ENCODE measurements at regions of chr15 and their contacts with region 1.

Region 1: DNA sequence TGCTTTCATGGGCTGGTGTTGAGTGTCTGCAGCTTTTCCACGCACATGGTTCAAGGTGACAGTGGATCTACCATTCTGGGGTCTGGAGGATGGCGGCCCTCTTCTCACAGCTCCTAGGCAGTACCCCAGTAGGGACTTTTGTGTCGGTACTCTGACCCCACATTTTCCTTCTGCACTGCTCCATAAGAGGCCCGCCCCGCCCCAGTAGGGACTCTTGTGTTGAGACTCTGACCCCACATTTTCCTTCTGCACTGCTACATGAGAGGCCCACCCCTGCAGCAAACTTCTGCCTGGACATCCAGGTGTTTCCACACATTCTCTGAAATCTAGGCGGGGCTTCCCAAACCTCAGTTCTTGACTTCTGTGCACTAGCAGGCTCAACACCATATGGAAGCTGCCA is 383.4 kb upstream of the MEIS2 start:
- DNase-seq: no peak
- H3K4me3 ChIP-seq: no peak overlapping the region
- H3K27ac ChIP-seq: no peak overlapping the region
- H3K4me1 ChIP-seq: no peaks in the 10 kb centered on the region
- H3K27me3 ChIP-seq: no peaks in the 10 kb centered on the region
- CTCF ChIP-seq: no peak

Region 2: GRCh38 chr15:37425541-37425940 is 58.2 kb before region 1 on chr15:
- CTCF ChIA-PET with region 1: no interaction called
- POLR2A ChIA-PET with region 1: no interaction called
- intact Hi-C with region 1: loop called (anchors 10 kb)
- DNase-seq: no peak
- H3K4me3 ChIP-seq: no peak overlapping the region
- H3K27ac ChIP-seq: no peak overlapping the region
- H3K4me1 ChIP-seq: no peaks in the 10 kb centered on the region
- H3K27me3 ChIP-seq: no peaks in the 10 kb centered on the region
- CTCF ChIP-seq: no peak

Region 3: DNA sequence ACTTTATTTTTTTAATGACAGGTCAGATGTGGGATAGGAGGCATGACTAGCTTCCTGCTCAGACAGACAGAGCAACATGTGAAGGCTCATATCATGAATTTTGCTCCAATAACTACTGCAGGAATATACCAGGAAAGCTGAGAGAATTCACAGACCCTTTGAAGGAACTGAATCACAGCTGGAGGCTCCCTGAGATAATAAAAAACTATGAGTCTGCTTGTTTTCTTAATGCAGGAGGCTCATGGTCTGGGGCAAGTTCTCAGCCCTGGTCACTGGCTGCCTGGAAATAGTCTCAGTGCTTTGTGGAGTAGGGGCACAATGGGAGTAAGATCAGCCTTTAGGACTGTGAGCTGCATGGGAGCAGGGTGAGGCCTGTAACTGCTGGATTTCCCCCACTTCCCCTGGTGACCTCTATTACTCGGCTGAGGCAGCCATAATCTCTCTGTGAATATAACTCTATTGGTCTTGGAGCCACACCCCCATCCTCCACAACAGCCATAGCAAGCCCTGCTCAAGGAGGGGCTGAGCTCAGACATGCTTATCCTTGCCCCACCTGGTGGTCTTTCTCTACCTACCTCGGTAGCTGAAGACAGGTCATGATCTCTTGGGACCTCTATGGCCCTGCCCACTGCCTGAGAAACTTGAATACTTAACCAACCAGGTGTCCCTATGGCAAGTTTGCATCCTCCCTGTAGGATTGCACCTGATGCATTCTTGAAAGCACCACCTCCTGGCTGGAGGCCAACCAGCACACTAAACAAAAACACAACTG is 169.1 kb after region 1 on chr15:
- CTCF ChIA-PET with region 1: no interaction called
- POLR2A ChIA-PET with region 1: no interaction called
- intact Hi-C with region 1: loop called (anchors 10 kb)
- DNase-seq: no peak
- H3K4me3 ChIP-seq: no peak overlapping the region
- H3K27ac ChIP-seq: no peak overlapping the region
- H3K4me1 ChIP-seq: no peaks in the 10 kb centered on the region
- H3K27me3 ChIP-seq: no peaks in the 10 kb centered on the region
- CTCF ChIP-seq: no peak

Measured in A673 (cell line).